ENCODE measurements at regions of chr14 and their contacts with region 1.

Region 1: GRCh38 chr14:43595096-43595772 is 911.8 kb downstream of the FSCB start:
- DNase-seq: no peak

Region 2: DNA sequence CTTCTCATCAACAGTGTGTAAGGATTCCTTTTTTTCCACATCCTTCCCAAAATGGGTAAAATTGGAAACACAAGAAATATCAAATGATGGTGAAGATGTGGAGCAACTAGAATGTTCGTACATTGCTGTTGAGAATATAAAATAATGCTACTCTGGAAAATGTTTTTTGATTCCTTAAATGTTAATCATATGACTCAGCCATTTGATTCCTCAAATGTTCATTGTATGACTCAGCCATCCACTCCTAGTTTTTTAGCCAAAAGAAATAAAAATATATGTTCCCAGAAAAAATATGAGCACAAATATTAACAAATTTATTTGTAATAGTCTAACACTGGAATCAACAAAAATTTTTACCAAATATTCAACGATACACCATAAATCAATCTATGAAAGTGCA is 879.9 kb before region 1 on chr14:
- intact Hi-C with region 1: no loop called
- DNase-seq: no peak

Region 3: DNA sequence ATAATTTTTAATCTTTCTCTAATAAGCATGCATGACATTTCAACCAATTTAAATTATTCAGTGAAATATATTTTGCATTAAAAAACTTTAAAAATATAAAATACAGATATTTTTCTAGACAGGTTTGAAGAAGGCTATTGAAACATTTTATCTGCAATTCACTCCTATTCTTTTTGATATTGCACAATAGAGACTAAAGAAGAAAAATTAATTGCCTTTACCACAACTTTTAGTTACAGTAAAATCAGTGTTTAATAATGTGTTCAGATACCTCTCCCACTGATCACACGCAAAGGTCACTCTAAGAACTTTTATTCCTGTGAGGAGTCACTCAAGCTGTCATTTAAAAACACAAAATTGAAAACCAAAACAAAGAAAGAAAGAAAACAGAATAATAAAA is 504.8 kb before region 1 on chr14:
- intact Hi-C with region 1: loop called in 1 of 2 experiments (anchors 5 kb)
- DNase-seq: no peak

Region 4: GRCh38 chr14:43697003-43697402 is 101.8 kb after region 1 on chr14:
- intact Hi-C with region 1: no loop called
- DNase-seq: no peak

Measured in posterior vena cava (tissue), 2 donors.